Prostate gland (tissue), 2 donors: ENCODE measurements at regions of chr12 and their contacts with region 1.

Region 1: GRCh38 chr12:80269803-80270552 is 170.6 kb downstream of the OTOGL start:
- DNase-seq: no peak
- H3K4me3 ChIP-seq: no peak overlapping the region
- H3K27ac ChIP-seq: no peak overlapping the region
- H3K4me1 ChIP-seq: no peaks in the 10 kb centered on the region
- H3K27me3 ChIP-seq: no peaks in the 10 kb centered on the region
- CTCF ChIP-seq: peak; percentile 15 to 46 (median 44)
- POLR2A ChIP-seq: no peak

Region 2: GRCh38 chr12:79420146-79420618 is 849.8 kb before region 1 on chr12:
- intact Hi-C with region 1: loop called (anchors 10 kb)
- DNase-seq: peak; percentile 22
- H3K4me3 ChIP-seq: no peak overlapping the region
- H3K27ac ChIP-seq: peak overlapping the region; percentile 36 to 40
- H3K4me1 ChIP-seq: peaks cover 3% of the 10 kb centered on the region
- H3K27me3 ChIP-seq: no peaks in the 10 kb centered on the region
- CTCF ChIP-seq: peak in 3 of 4 experiments; percentile 42 to 69 (median 57)
- POLR2A ChIP-seq: no peak

Region 3: GRCh38 chr12:79547735-79548609 is 722.0 kb before region 1 on chr12:
- intact Hi-C with region 1: loop called (anchors 5 kb)
- DNase-seq: peak; percentile 47
- H3K4me3 ChIP-seq: no peak overlapping the region
- H3K27ac ChIP-seq: peak overlapping the region; percentile 53
- H3K4me1 ChIP-seq: peaks cover 14% of the 10 kb centered on the region
- H3K27me3 ChIP-seq: no peaks in the 10 kb centered on the region
- CTCF ChIP-seq: peak in 3 of 4 experiments; percentile 58 to 66 (median 62)
- POLR2A ChIP-seq: no peak

Region 4: GRCh38 chr12:79811351-79811750 is 458.6 kb before region 1 on chr12:
- intact Hi-C with region 1: loop called (anchors 10 kb)
- DNase-seq: no peak
- H3K4me3 ChIP-seq: no peak overlapping the region
- H3K27ac ChIP-seq: no peak overlapping the region
- H3K4me1 ChIP-seq: no peaks in the 10 kb centered on the region
- H3K27me3 ChIP-seq: no peaks in the 10 kb centered on the region
- CTCF ChIP-seq: no peak
- POLR2A ChIP-seq: no peak

Region 5: GRCh38 chr12:80068173-80068572 is 201.8 kb before region 1 on chr12:
- intact Hi-C with region 1: no loop called
- DNase-seq: no peak
- H3K4me3 ChIP-seq: no peak overlapping the region
- H3K27ac ChIP-seq: no peak overlapping the region
- H3K4me1 ChIP-seq: no peaks in the 10 kb centered on the region
- H3K27me3 ChIP-seq: no peaks in the 10 kb centered on the region
- CTCF ChIP-seq: no peak
- POLR2A ChIP-seq: no peak

Region 6: DNA sequence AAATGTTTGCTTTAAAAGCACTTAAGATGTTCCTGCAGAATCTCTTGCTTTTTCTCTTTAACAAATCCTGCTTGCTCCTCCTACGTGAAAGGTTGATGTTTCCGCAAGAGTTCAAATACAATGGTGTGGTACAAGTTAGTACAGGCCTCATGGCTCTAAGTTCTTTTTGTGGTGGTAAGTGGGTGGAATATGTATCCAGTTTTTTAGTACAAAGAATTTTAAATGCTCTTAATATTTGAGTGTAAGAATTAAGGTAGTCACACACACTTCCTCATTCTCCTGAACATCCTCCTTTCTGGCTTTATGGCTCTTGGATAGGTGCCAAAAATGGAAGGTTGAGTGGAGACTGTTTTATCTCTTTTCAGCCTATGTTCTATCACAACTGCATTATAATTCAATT is 168.9 kb before region 1 on chr12:
- intact Hi-C with region 1: no loop called
- DNase-seq: no peak
- H3K4me3 ChIP-seq: no peak overlapping the region
- H3K27ac ChIP-seq: no peak overlapping the region
- H3K4me1 ChIP-seq: no peaks in the 10 kb centered on the region
- H3K27me3 ChIP-seq: no peaks in the 10 kb centered on the region
- CTCF ChIP-seq: no peak
- POLR2A ChIP-seq: no peak

Region 7: GRCh38 chr12:80195074-80195726 is 74.8 kb before region 1 on chr12:
- intact Hi-C with region 1: loop called (anchors 10 kb)
- DNase-seq: no peak
- H3K4me3 ChIP-seq: no peak overlapping the region
- H3K27ac ChIP-seq: no peak overlapping the region
- H3K4me1 ChIP-seq: no peaks in the 10 kb centered on the region
- H3K27me3 ChIP-seq: no peaks in the 10 kb centered on the region
- CTCF ChIP-seq: peak in 3 of 4 experiments; percentile 12 to 50 (median 32)
- POLR2A ChIP-seq: no peak